A549 (cell line): ENCODE measurements at regions of chr1 and their contacts with region 1.

Region 1: GRCh38 chr1:245045087-245045881 is 109.5 kb upstream of the KIF26B start:
- DNase-seq: peak in 1 of 2 experiments; percentile 85
- ATAC-seq: peak; percentile 81 to 93
- H3K4me3 ChIP-seq: no peak overlapping the region
- H3K27ac ChIP-seq: peak overlapping the region in 1 of 2 experiments; percentile 18; a peak in 2 of 6 replicates
- H3K4me1 ChIP-seq: peaks cover 22% of the 10 kb centered on the region
- CTCF ChIP-seq: no peak
- EP300 ChIP-seq: no peak
- POLR2A ChIP-seq: no peak
- RAD21 ChIP-seq: no peak

Region 2: GRCh38 chr1:244513493-244513892 is 531.8 kb before region 1 on chr1:
- CTCF ChIA-PET with region 1: no interaction called
- POLR2A ChIA-PET with region 1: no interaction called
- DNase-seq: no peak
- ATAC-seq: no peak
- H3K4me3 ChIP-seq: no peak overlapping the region
- H3K27ac ChIP-seq: no peak overlapping the region
- H3K4me1 ChIP-seq: no peaks in the 10 kb centered on the region
- CTCF ChIP-seq: no peak
- EP300 ChIP-seq: no peak
- POLR2A ChIP-seq: no peak
- RAD21 ChIP-seq: no peak

Region 3: DNA sequence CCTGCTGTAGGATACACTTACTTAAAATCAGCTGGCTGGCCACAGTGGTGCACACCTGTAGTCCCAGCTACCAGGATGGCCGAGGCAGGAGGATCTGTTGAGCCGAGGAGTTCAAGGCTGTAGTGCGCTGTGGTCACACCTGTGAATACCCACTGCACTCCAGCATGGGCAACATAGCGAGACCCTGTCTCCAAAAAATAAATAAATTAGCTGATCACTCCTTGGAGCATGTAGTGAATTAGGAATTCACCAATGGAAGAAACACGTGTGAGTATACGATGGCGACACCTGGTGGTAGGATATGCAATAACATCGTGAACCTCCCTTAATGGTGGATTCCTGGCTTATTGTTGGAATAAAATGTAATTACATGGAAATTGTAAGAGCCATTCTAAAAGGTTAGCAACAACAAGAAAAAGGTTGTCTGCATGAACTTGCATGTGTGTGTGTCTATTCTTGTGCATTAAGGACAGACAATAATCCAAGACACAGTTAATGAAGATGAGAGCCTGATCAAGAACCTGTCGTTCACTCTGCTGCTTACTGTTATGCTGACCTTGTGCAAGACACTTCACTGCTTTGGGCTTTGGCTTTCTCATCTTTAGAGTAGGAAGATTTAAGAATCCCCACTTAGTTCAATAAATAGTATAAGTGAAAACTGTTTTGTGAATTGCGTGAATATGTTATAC is 248.4 kb before region 1 on chr1:
- CTCF ChIA-PET with region 1: interaction called, 24 read pairs
- POLR2A ChIA-PET with region 1: no interaction called
- DNase-seq: peak; percentile 42 to 67
- ATAC-seq: peak; percentile 67 to 81; a peak in 3 of 6 replicates
- H3K4me3 ChIP-seq: no peak overlapping the region
- H3K27ac ChIP-seq: no peak overlapping the region
- H3K4me1 ChIP-seq: no peaks in the 10 kb centered on the region
- CTCF ChIP-seq: peak; percentile 89
- EP300 ChIP-seq: no peak
- POLR2A ChIP-seq: no peak
- RAD21 ChIP-seq: peak; percentile 81 to 92

Region 4: GRCh38 chr1:244864253-244865027 is 180.8 kb before region 1 on chr1 and contains the start of gene HNRNPU:
- CTCF ChIA-PET with region 1: interaction called, 28 read pairs
- POLR2A ChIA-PET with region 1: interaction called, 16 read pairs
- DNase-seq: peak; percentile 66 to 98
- ATAC-seq: peak; percentile 75 to 90
- H3K4me3 ChIP-seq: peak within 1 kb of the TSS; percentile 100
- H3K27ac ChIP-seq: peak within 1 kb of the TSS; percentile 96 to 100
- H3K4me1 ChIP-seq: peaks cover 37% of the 10 kb centered on the region
- CTCF ChIP-seq: no peak; the same call in 2 of the 3 replicates
- EP300 ChIP-seq: no peak
- POLR2A ChIP-seq: peak; percentile 97
- RAD21 ChIP-seq: peak; percentile 7 to 9; a peak in 1 of 5 replicates
- polyA plus RNA-seq, gene HNRNPU: 345 and 529 TPM in 2 replicates

Region 5: DNA sequence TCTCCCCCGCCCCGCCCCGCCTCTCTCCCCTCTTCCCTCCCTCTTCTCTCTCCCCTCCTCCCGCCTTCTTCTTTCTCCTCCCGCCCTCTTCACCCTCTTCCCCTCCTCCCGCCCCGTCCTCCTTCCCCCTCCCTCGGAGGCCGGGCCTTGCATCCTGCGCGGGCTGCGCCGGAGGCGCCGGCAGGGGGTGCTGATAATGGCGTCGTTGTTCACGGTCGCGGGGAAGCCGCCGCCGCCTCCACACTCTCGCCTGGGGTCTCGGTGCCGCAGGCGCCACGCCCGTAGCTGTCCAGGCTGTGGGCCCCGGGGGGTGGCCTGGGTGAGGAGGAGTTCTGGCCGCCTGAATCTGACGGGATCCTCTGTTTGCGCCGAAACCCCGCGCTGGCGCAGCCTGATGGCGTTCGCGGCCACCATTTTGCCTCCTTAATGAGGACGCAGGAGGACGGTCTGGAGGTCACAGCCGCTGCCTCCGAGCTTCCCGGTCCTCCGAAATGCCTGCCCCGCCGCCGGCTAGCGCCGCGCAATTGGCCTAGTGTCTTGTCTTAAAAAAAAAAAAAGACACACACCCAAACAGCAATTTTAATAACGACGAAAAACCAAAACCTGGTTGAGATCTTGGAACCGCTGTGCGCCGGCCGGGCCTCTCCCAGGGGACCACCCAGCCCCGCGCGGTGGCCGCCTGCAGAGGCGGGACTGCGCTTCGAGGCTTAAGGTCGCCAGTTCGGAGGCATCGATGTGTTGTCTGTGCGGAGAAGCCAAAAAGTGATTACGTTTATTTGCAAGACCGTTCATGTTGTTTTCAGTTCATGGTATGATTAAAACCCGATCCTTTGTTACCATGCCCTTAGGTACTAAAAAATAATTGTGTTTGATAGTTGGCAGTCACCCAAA is 74.4 kb before region 1 on chr1:
- CTCF ChIA-PET with region 1: interaction called, 14 read pairs
- POLR2A ChIA-PET with region 1: interaction called, 13 read pairs
- DNase-seq: peak in 1 of 2 experiments; percentile 97
- ATAC-seq: peak; percentile 76 to 82
- H3K4me3 ChIP-seq: peak overlapping the region; percentile 57
- H3K27ac ChIP-seq: peak overlapping the region; percentile 93
- H3K4me1 ChIP-seq: peaks cover 30% of the 10 kb centered on the region
- CTCF ChIP-seq: peak; percentile 52
- EP300 ChIP-seq: no peak
- POLR2A ChIP-seq: peak; percentile 68
- RAD21 ChIP-seq: peak; percentile 36 to 53

Region 6: GRCh38 chr1:245025525-245025924 is 19.8 kb before region 1 on chr1:
- CTCF ChIA-PET with region 1: interaction called, 37 read pairs
- POLR2A ChIA-PET with region 1: no interaction called
- DNase-seq: no peak
- ATAC-seq: no peak
- H3K4me3 ChIP-seq: no peak overlapping the region
- H3K27ac ChIP-seq: no peak overlapping the region
- H3K4me1 ChIP-seq: no peaks in the 10 kb centered on the region
- CTCF ChIP-seq: no peak
- EP300 ChIP-seq: no peak
- POLR2A ChIP-seq: no peak
- RAD21 ChIP-seq: no peak